Activated CD8-positive, alpha-beta T cell treated with anti-CD3 and anti-CD28 coated beads for 36 hours (primary cell): ENCODE measurements at regions of chr12 and their contacts with region 1.

Region 1: DNA sequence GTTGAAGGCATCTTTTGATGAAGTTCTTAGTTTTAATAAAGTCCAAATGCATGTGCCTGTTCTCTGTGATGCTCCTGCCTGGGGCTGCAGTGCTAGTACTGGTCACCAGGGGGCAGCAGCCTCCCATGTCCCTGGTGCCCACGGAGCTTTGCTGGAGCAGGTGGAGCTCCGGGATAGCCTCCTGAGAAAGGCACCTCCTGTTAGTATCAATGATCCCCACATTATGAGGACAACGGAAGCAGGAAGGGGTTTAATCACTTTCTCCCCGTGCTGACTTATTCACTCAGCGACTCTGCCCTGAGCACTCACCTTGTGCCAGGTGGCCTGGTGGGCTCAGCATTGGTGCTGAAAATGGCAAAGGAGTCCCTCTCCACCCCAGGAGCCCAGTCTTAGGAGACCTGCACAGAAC is 123.0 kb upstream of the PZP start:
- DNase-seq: peak; percentile 78
- ATAC-seq: peak; percentile 91
- H3K4me3 Mint-ChIP-seq: no peak overlapping the region
- H3K27ac Mint-ChIP-seq: no peak overlapping the region
- H3K4me1 Mint-ChIP-seq: peaks cover 12% of the 10 kb centered on the region
- H3K27me3 Mint-ChIP-seq: no peaks in the 10 kb centered on the region
- CTCF ChIP-seq: peak; percentile 96

Region 2: GRCh38 chr12:9588749-9589148 is 257.5 kb after region 1 on chr12:
- CTCF ChIA-PET with region 1: interaction called, 3 read pairs
- POLR2A ChIA-PET with region 1: no interaction called
- intact Hi-C with region 1: loop called (anchors 5 kb)
- DNase-seq: no peak
- ATAC-seq: no peak
- H3K4me3 Mint-ChIP-seq: no peak overlapping the region
- H3K27ac Mint-ChIP-seq: no peak overlapping the region
- H3K4me1 Mint-ChIP-seq: no peaks in the 10 kb centered on the region
- H3K27me3 Mint-ChIP-seq: no peaks in the 10 kb centered on the region
- CTCF ChIP-seq: no peak

Region 3: DNA sequence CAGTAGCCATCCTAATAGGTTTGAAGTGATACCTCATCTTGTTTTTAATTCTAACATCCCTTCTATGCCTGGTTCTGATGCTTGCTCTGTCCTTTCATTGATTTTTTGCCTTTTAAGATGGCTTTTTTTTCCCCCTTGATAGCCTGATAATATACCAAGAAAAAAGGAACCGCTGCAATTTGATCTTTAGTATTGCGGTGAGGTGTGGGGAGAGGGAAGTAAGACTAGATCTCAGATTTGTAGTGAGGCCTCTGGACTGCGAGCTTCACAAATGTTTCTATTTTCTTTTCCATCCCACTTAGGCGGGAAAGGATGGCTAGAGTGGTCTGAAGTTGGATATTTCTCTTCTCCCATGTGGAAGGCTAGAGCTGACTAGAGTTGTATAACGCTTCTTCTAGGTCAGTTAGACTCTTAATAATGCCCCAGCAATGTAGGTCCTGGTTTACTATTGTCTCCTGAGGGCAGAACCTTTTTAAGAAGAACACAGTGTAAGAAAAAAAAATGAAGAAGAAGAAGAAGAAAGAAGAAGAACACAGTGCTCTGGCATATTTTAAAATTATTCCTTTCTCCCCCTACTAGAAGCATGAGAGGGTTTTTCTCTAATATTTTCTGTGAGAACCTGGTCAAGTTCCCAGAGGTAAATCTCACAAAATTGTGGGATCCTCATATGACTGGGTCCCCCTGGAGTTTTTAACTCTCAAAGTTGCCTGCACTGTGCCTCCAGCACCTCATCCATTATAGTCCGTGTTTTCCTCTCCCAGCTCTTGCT is 288.4 kb after region 1 on chr12:
- CTCF ChIA-PET with region 1: interaction called, 3 read pairs
- POLR2A ChIA-PET with region 1: no interaction called
- intact Hi-C with region 1: loop called (anchors 10 kb)
- DNase-seq: no peak
- ATAC-seq: no peak
- H3K4me3 Mint-ChIP-seq: no peak overlapping the region
- H3K27ac Mint-ChIP-seq: no peak overlapping the region
- H3K4me1 Mint-ChIP-seq: peaks cover 29% of the 10 kb centered on the region
- H3K27me3 Mint-ChIP-seq: no peaks in the 10 kb centered on the region
- CTCF ChIP-seq: no peak